Body of pancreas (tissue), 4 donors: ENCODE measurements at regions of chr2 and their contacts with region 1.

Region 1: DNA sequence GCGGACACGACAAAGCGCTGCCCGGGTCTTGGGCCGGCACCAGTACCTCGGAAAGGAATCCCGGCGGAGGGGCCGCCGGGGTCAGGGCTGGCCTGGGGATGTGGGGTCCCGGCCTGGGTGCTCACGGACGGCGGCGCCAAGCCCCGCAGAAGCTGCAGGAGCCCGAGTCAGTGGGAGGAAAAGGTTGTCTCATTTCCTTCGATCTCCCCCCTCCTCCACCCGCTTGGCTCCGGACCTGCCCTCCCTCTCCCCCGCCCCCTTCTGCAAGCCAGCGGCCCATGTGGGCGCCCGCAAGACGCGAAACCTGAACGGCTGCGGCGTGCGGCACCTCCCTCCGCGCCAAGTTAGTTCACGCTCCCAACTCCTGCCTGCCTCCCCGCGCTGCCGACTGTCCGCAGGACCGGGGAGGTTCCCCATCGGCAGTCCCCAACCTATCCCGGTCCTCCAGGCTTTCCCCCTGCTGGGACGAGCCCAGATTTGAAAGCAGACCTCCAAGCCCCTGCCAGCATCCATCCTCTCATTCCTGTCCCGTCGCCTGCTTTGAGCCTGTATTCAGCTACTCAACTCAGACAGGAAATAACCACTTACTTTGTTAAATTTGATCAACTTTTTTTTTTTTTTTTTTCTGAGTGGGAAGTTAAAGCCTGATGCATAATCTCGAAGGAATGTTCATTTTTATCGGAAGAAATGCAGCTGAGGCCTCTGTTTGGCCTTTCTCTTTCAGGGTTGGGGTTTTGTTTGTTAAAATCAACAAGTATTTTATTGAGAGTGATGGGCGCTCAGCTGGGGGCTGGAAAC is at the start of gene EVA1A:
- DNase-seq: peak; percentile 88 to 90 (median 89)
- ATAC-seq: peak; percentile 88
- H3K4me3 ChIP-seq: peak within 1 kb of the TSS; percentile 56 to 69
- H3K27ac ChIP-seq: peak within 1 kb of the TSS; percentile 95 to 99 (median 97)
- H3K4me1 ChIP-seq: peaks cover 45% of the 10 kb centered on the region
- H3K27me3 ChIP-seq: no peaks in the 10 kb centered on the region
- CTCF ChIP-seq: peak in 2 of 7 experiments; percentile 5 to 15
- POLR2A ChIP-seq: peak; percentile 55 to 86 (median 57)
- total RNA-seq, gene EVA1A: 27.5 to 31.3 TPM

Region 2: DNA sequence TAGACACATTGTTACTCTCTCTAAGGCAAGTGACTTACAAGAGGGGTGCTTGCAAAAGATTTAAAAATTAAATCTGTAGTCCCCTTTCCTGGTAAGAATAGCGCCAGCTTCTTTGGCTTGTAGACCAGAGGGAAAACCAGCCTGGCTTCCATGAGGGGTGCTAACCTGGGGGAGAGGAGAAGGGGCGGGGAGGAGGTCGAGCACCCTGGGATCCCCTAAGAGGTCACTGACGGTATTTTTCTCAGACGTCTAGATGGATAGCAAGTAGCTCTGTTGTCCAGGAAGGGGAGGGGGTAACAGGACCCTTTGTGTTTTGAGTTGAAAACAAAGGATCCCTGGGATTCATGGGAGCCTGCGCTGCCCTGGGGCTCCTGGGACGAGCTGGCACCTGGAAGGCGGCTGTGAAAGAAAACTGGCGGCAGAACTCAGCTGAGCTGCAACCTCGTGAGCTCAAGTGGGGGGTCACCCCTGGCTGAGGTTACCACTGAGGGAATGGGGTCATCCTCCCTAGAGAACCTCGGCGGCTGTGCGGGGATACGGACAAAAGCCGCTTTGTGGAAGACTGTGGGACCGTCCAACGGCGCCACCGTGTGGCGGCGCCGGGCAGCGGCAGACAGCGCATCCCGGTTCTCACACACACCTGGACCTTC is 47.8 kb after region 1 on chr2:
- intact Hi-C with region 1: loop called (anchors 5 kb)
- DNase-seq: peak; percentile 72 to 84 (median 78)
- ATAC-seq: peak; percentile 92
- H3K4me3 ChIP-seq: no peak overlapping the region
- H3K27ac ChIP-seq: no peak overlapping the region
- H3K4me1 ChIP-seq: peaks cover 15% of the 10 kb centered on the region
- H3K27me3 ChIP-seq: no peaks in the 10 kb centered on the region
- CTCF ChIP-seq: peak; percentile 89 to 96 (median 94)
- POLR2A ChIP-seq: no peak